GM12878 (cell line): ENCODE measurements at regions of chr11 and their contacts with region 1.

Region 1: GRCh38 chr11:8099291-8099899 is 18.4 kb downstream of the TUB start:
- DNase-seq: no peak
- ATAC-seq: peak; percentile 90
- H3K4me3 ChIP-seq: no peak overlapping the region
- H3K27ac ChIP-seq: no peak overlapping the region
- H3K4me1 ChIP-seq: no peaks in the 10 kb centered on the region
- H3K27me3 ChIP-seq: no peaks in the 10 kb centered on the region
- CTCF ChIP-seq: peak; percentile 70 to 81 (median 72)
- EP300 ChIP-seq: no peak
- POLR2A ChIP-seq: no peak
- RAD21 ChIP-seq: peak; percentile 85

Region 2: DNA sequence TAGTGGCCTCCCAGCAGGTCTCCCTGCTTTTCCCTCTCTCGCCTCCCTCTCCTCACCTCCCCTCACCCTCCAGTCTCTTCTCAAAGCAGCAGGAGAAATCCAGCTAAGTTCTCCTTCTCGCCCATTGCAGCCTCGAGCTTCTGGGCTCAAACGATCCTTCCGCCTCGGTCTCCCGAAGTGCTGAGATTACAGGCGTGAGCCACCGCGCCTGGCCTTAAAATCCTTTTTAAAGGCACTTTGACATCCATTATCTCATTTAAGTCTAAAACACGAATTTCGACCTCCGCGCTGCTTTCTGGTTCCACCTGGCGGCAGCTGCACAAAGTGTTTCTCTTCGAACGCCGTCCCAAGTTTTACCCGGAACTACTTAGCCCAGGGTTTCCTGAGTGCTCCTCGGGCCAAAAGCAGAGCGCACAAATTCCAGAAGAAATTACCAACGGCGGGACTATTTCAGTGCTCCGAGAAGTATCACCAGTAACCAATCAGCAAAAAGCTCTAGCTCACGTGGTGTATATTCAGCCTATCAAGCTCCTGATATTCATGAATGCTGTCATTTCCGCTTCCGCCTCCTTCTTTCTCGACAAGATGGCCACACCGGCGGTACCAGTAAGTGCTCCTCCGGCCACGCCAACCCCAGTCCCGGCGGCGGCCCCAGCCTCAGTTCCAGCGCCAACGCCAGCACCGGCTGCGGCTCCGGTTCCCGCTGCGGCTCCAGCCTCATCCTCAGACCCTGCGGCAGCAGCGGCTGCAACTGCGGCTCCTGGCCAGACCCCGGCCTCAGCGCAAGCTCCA is 112.4 kb before region 1 on chr11 and contains the start of gene EIF3F:
- CTCF ChIA-PET with region 1: interaction called, 10 read pairs
- POLR2A ChIA-PET with region 1: no interaction called
- RAD21 ChIA-PET with region 1: interaction called, 4 read pairs
- SMC1A ChIA-PET with region 1: interaction called, 7 read pairs
- in situ Hi-C with region 1: no loop called
- intact Hi-C with region 1: no loop called
- DNase-seq: peak; percentile 100
- ATAC-seq: peak; percentile 95
- H3K4me3 ChIP-seq: peak within 1 kb of the TSS; percentile 91
- H3K27ac ChIP-seq: peak within 1 kb of the TSS; percentile 30
- H3K4me1 ChIP-seq: peaks cover 11% of the 10 kb centered on the region
- H3K27me3 ChIP-seq: no peaks in the 10 kb centered on the region
- CTCF ChIP-seq: peak; percentile 76 to 91 (median 83)
- EP300 ChIP-seq: no peak
- POLR2A ChIP-seq: peak; percentile 73
- RAD21 ChIP-seq: peak; percentile 70
- polyA plus RNA-seq, gene EIF3F: 81.3 to 226 TPM

Region 3: DNA sequence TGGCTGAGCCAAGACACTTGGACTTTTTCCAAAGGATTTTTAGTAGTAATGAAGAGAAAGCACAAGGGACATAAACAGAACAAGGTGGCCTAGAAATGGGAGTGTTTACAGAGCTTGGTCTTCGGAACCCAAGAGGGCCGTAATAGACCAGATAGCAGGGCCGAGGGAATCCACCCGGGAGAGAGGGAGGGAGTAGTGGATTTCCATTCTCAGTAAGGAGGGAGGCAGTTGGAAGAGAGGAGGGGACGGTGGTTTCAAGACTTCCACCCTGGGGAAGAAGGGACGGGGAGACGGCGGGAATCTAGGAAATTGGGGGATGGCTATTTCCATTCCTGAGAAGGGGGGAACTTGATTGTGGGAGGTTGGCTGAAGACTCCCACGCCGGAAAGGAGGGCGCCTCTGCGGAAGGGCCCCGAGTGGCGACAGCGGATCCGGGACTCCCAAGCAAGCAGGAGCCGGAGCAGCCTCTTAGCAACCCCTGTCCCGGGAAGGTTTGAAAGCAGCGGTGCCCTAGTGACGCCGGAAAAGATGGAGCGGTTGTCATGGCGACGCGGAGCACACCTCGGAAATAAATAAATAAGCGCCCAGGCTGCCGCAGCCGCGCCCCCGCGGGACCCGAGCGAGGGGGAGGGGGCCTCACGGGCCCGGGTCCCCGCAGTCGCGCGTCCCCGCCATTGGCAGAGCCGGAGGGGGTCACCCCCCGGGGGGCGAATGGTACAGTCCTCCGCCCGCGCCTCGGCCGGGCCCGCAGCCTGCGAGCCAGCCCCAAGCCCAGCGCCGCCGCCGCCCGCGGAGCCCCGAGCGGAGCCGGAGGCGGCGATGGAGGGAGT is 80.7 kb before region 1 on chr11:
- CTCF ChIA-PET with region 1: interaction called, 10 read pairs
- POLR2A ChIA-PET with region 1: no interaction called
- RAD21 ChIA-PET with region 1: interaction called, 4 read pairs
- SMC1A ChIA-PET with region 1: no interaction called
- in situ Hi-C with region 1: no loop called
- intact Hi-C with region 1: no loop called
- DNase-seq: no peak
- ATAC-seq: peak; percentile 68
- H3K4me3 ChIP-seq: no peak overlapping the region
- H3K27ac ChIP-seq: no peak overlapping the region
- H3K4me1 ChIP-seq: no peaks in the 10 kb centered on the region
- H3K27me3 ChIP-seq: peaks cover 5 to 8% of the 10 kb centered on the region in 2 experiments
- CTCF ChIP-seq: no peak
- EP300 ChIP-seq: no peak
- POLR2A ChIP-seq: no peak
- RAD21 ChIP-seq: no peak

Region 4: GRCh38 chr11:8056810-8057463 is 42.5 kb before region 1 on chr11:
- CTCF ChIA-PET with region 1: interaction called, 11 read pairs
- POLR2A ChIA-PET with region 1: no interaction called
- RAD21 ChIA-PET with region 1: no interaction called
- SMC1A ChIA-PET with region 1: interaction called, 3 read pairs
- in situ Hi-C with region 1: no loop called
- intact Hi-C with region 1: no loop called
- DNase-seq: no peak
- ATAC-seq: no peak
- H3K4me3 ChIP-seq: no peak overlapping the region
- H3K27ac ChIP-seq: no peak overlapping the region
- H3K4me1 ChIP-seq: no peaks in the 10 kb centered on the region
- H3K27me3 ChIP-seq: no peaks in the 10 kb centered on the region
- CTCF ChIP-seq: no peak
- EP300 ChIP-seq: no peak
- POLR2A ChIP-seq: no peak
- RAD21 ChIP-seq: no peak

Region 5: GRCh38 chr11:8111636-8112035 is 12.2 kb after region 1 on chr11:
- CTCF ChIA-PET with region 1: interaction called, 44 read pairs
- POLR2A ChIA-PET with region 1: no interaction called
- RAD21 ChIA-PET with region 1: interaction called, 5 read pairs
- SMC1A ChIA-PET with region 1: interaction called, 5 read pairs
- in situ Hi-C with region 1: no loop called
- intact Hi-C with region 1: no loop called
- DNase-seq: no peak
- ATAC-seq: no peak
- H3K4me3 ChIP-seq: no peak overlapping the region
- H3K27ac ChIP-seq: no peak overlapping the region
- H3K4me1 ChIP-seq: no peaks in the 10 kb centered on the region
- H3K27me3 ChIP-seq: no peaks in the 10 kb centered on the region
- CTCF ChIP-seq: no peak
- EP300 ChIP-seq: no peak
- POLR2A ChIP-seq: no peak
- RAD21 ChIP-seq: no peak